Naive thymus-derived CD4-positive, alpha-beta T cell (primary cell): ENCODE measurements at regions of chr1 and their contacts with region 1.

Region 1: GRCh38 chr1:206912445-206913095 is 9.2 kb downstream of the FCMR start:
- DNase-seq: peak; percentile 26 to 73 (median 67)
- ATAC-seq: peak; percentile 73
- H3K4me3 ChIP-seq: no peak overlapping the region
- H3K4me3 Mint-ChIP-seq: peak overlapping the region in 3 of 10 donors; percentile 67 to 85 (median 75)
- H3K27ac ChIP-seq: peak overlapping the region; percentile 90
- H3K27ac Mint-ChIP-seq: peak overlapping the region in 4 of 9 donors; percentile 83 to 96 (median 92)
- H3K4me1 ChIP-seq: peaks cover 59 to 93% of the 10 kb centered on the region in 2 donors
- H3K4me1 Mint-ChIP-seq: peaks cover 73 to 94% (median 92%) of the 10 kb centered on the region in 7 donors
- H3K27me3 ChIP-seq: no peaks in the 10 kb centered on the region
- H3K27me3 Mint-ChIP-seq: peaks cover 0 to 6% (median 0%) of the 10 kb centered on the region in 5 donors

Region 2: GRCh38 chr1:206725109-206725963 is 187.2 kb before region 1 on chr1:
- CTCF ChIA-PET with region 1: interaction called, 25 read pairs
- POLR2A ChIA-PET with region 1: interaction called, 13 read pairs
- intact Hi-C with region 1: loop called (anchors 1 kb)
- DNase-seq: peak in 8 of 9 donors; percentile 35 to 64 (median 58)
- ATAC-seq: peak; percentile 61
- H3K4me3 ChIP-seq: no peak overlapping the region
- H3K4me3 Mint-ChIP-seq: no peak overlapping the region
- H3K27ac ChIP-seq: no peak overlapping the region
- H3K27ac Mint-ChIP-seq: peak overlapping the region in 8 of 9 donors; percentile 19 to 90 (median 58)
- H3K4me1 ChIP-seq: peaks cover 17 to 25% of the 10 kb centered on the region in 2 donors
- H3K4me1 Mint-ChIP-seq: peaks cover 29 to 50% (median 46%) of the 10 kb centered on the region in 7 donors
- H3K27me3 ChIP-seq: no peaks in the 10 kb centered on the region
- H3K27me3 Mint-ChIP-seq: no peaks in the 10 kb centered on the region

Region 3: GRCh38 chr1:206803221-206803730 is 109.3 kb before region 1 on chr1:
- CTCF ChIA-PET with region 1: interaction called, 65 read pairs
- POLR2A ChIA-PET with region 1: interaction called, 14 read pairs
- intact Hi-C with region 1: no loop called
- DNase-seq: peak; percentile 42 to 96 (median 93)
- ATAC-seq: peak; percentile 97
- H3K4me3 ChIP-seq: no peak overlapping the region
- H3K4me3 Mint-ChIP-seq: peak overlapping the region in 9 of 10 donors; percentile 32 to 71 (median 57)
- H3K27ac ChIP-seq: peak overlapping the region; percentile 81
- H3K27ac Mint-ChIP-seq: peak overlapping the region; percentile 83 to 99 (median 95)
- H3K4me1 ChIP-seq: peaks cover 34 to 41% of the 10 kb centered on the region in 2 donors
- H3K4me1 Mint-ChIP-seq: peaks cover 29 to 78% (median 77%) of the 10 kb centered on the region in 7 donors
- H3K27me3 ChIP-seq: no peaks in the 10 kb centered on the region
- H3K27me3 Mint-ChIP-seq: peaks cover 0 to 44% (median 0%) of the 10 kb centered on the region in 5 donors

Region 4: DNA sequence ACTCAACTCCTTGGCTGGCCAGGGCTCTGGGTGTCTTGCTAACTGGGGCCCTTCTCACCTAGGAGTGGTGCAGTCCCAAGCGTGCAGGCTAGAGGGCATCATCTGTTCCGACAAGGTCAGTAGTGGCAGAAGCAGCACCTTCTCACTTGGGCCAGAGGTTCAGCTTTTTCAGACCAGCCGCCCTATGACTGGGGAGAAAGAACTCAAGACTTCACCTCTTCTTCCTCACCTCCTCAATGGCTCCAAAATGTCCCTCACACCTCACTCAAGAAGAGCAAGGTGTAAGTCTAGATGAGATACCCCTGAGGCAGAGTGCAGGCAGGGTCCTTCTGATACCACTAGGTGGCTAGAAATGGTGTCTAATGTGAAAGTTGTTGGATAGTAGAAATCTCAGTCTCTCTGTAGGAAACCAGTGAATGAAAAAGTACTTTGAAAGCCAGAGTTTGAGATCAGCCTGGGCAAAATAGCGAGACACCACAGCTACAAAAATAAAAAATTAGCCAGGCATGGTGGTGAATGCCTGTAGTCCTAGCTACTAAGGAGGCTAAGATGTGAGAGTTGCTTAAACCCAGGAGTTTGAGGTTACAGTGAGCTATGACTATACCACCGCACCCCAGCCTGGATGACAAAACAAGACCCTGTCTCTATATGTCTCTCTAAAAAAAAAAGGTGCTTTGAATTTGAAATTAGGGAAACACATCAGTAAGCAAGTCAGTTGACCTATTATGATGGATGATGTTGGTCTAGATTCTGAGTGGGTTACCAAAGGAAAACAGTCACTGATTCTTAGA is 55.7 kb before region 1 on chr1:
- CTCF ChIA-PET with region 1: interaction called, 50 read pairs
- POLR2A ChIA-PET with region 1: interaction called, 42 read pairs
- intact Hi-C with region 1: loop called in 1 of 2 experiments (anchors 1 kb)
- DNase-seq: peak in 5 of 9 donors; percentile 19 to 32 (median 28)
- ATAC-seq: peak; percentile 54
- H3K4me3 ChIP-seq: no peak overlapping the region
- H3K4me3 Mint-ChIP-seq: no peak overlapping the region
- H3K27ac ChIP-seq: no peak overlapping the region
- H3K27ac Mint-ChIP-seq: peak overlapping the region in 1 of 9 donors; percentile 55
- H3K4me1 ChIP-seq: peaks cover 0 to 15% of the 10 kb centered on the region in 2 donors
- H3K4me1 Mint-ChIP-seq: peaks cover 7 to 31% (median 24%) of the 10 kb centered on the region in 7 donors
- H3K27me3 ChIP-seq: no peaks in the 10 kb centered on the region
- H3K27me3 Mint-ChIP-seq: peaks cover 0 to 32% (median 0%) of the 10 kb centered on the region in 5 donors

Region 5: GRCh38 chr1:206895830-206896242 is 16.7 kb before region 1 on chr1:
- CTCF ChIA-PET with region 1: interaction called, 26 read pairs
- POLR2A ChIA-PET with region 1: interaction called, 600 read pairs
- intact Hi-C with region 1: loop called in 1 of 2 experiments (anchors 1 kb)
- DNase-seq: no peak
- ATAC-seq: no peak
- H3K4me3 ChIP-seq: no peak overlapping the region
- H3K4me3 Mint-ChIP-seq: no peak overlapping the region
- H3K27ac ChIP-seq: no peak overlapping the region
- H3K27ac Mint-ChIP-seq: peak overlapping the region in 6 of 9 donors; percentile 28 to 75 (median 54)
- H3K4me1 ChIP-seq: peaks cover 4 to 39% of the 10 kb centered on the region in 2 donors
- H3K4me1 Mint-ChIP-seq: peaks cover 26 to 85% (median 73%) of the 10 kb centered on the region in 7 donors
- H3K27me3 ChIP-seq: no peaks in the 10 kb centered on the region
- H3K27me3 Mint-ChIP-seq: no peaks in the 10 kb centered on the region